ENCODE measurements at regions of chr17 and their contacts with region 1.

Region 1: GRCh38 chr17:29740017-29740416 is 117.3 kb upstream of the CORO6 start:
- DNase-seq: no peak
- ATAC-seq: peak; percentile 21

Region 2: DNA sequence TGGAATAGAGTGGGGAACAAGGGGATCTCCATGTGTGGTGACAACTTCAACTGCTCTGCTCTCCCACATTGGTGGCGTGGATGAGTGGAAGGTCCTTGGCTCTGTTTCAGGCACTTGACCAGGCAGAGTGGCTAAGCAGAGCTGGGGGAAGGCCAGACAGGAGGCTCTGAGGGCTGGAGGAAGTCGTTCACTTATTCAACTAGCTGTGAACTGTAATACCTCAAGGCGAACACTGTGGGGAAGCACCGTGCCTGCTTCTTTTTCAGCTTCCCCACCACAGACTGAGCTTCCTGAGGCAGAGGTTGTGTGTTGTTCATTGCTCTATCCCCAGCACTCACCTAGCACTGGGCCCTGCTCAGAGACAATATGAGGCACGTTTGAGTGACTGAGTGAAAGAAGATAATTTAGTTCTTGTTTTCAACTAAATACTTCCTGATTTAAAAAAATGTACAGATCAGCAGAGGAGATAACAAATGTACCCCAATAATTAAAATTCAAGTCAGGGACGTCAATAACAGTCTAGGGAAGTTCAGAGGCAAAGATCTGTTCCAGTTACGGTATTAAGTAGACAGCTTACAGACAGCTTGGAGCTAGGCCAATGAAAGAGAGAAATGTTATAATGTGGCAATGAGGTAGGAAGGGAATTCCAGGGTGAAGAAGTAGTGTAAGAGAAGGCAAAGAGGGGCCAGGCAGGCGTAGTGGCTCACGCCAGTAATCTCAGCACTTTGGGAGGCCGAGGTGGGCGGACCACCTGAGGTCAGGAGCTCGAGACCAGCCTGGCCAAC is 594.5 kb before region 1 on chr17:
- intact Hi-C with region 1: no loop called
- DNase-seq: peak; percentile 71
- ATAC-seq: peak; percentile 44

Region 3: GRCh38 chr17:29659155-29659554 is 80.9 kb before region 1 on chr17:
- intact Hi-C with region 1: no loop called
- DNase-seq: no peak
- ATAC-seq: no peak

Region 4: DNA sequence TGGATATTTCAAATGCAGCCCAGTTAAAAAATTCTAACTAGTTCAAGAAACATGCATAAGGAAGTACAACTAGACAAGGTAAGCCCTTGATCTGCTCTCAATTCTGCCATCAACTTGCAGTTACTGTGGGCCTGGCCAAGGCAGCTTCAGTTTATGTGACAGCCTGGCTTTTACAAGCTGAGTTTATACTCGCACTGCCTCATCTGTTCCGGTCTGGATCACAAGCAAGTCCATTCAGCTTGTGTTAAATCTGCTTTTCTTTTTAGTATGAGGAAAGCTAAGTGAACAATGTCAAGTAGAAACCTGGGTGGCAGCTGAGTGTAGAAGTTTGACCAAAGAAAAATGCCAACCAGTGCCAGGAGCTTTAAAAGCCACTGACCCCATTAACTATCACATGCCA is 40.7 kb before region 1 on chr17:
- intact Hi-C with region 1: loop called (anchors 10 kb)
- DNase-seq: no peak
- ATAC-seq: peak; percentile 45

Region 5: DNA sequence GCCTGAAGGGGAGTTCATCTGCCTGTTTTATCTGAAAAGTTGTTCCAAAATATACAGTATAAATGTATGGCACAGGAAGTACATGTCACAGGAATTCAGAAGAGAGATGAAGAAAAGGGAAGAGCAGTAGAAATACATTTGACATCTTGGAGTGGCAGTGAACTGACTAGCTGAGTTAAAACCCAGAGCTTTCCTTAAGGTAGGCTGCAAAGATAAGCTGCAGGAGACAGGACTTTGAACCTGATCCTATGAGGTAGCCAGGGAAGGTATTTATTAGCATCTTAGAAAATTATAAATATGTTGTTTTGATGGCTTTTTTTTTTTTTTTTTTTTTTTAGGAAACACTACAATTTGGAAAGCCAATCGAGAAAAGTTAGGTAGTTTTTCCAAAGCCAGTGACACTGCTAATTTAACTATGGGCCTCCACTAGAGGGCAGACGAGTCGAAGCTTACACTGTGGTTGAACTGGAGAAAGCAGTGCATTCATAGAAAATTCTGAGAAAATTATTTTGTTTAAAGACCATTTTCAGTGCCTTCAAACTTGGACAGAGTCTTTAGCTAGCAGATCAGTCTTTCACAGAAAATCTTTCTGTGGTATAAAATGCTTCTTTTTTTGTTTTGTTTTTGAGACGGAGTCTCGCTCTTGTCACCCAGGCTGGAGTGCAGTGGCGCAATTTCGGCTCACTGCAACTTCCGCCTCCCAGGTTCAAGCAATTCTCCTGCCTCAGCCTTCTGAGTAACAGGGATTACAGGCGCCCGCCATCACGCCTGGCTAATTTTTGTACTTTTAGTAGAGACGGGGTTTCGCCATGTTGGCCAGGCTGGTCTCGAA is 67.7 kb after region 1 on chr17:
- intact Hi-C with region 1: no loop called
- DNase-seq: peak; percentile 56
- ATAC-seq: peak; percentile 68

Measured in Right ventricle myocardium superior (tissue), 1 donor.